MCF 10A (cell line): ENCODE measurements at regions of chr4 and their contacts with region 1.

Region 1: GRCh38 chr4:70183168-70183939 is 12.2 kb upstream of the ODAM start:
- DNase-seq: peak; percentile 62
- H3K4me3 Mint-ChIP-seq: no peak overlapping the region
- H3K27ac Mint-ChIP-seq: no peak overlapping the region
- H3K4me1 Mint-ChIP-seq: no peaks in the 10 kb centered on the region
- H3K27me3 Mint-ChIP-seq: peaks cover 90% of the 10 kb centered on the region
- CTCF ChIP-seq: peak; percentile 54

Region 2: GRCh38 chr4:69689599-69689998 is 493.8 kb before region 1 on chr4:
- CTCF ChIA-PET with region 1: interaction called, 4 read pairs
- POLR2A ChIA-PET with region 1: no interaction called
- intact Hi-C with region 1: loop called (anchors 1 kb)
- DNase-seq: peak; percentile 65
- H3K4me3 Mint-ChIP-seq: no peak overlapping the region
- H3K27ac Mint-ChIP-seq: no peak overlapping the region
- H3K4me1 Mint-ChIP-seq: no peaks in the 10 kb centered on the region
- H3K27me3 Mint-ChIP-seq: no peaks in the 10 kb centered on the region
- CTCF ChIP-seq: peak; percentile 45

Region 3: DNA sequence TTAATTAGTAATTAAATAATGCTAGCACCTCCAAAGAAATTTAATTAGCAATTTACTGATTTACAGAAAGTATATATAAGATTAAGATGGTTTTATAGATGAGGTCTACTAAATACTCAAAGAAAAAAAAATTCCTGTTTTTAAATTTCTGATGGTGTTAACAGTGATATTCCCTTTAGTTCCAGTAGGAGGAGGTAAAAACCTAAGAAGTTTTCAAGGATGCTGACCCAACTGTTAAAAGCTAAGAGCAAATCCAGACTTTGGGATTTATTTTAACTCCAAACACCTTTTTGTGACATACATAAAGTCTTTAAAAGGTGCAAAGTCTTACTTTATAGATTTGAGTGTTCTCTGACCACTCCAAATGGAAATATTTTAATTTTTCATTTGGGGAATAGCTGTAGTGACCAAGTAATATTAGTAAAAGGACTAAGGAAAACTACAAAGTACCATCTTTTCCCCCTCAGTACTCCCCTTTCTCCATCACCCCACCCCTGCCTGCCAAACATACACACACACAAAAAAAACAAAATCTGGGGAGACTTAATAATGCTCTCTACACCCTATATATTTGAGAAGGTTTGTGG is 286.7 kb before region 1 on chr4:
- CTCF ChIA-PET with region 1: interaction called, 15 read pairs
- POLR2A ChIA-PET with region 1: no interaction called
- intact Hi-C with region 1: loop called (anchors 1 kb)
- DNase-seq: peak; percentile 27
- H3K4me3 Mint-ChIP-seq: no peak overlapping the region
- H3K27ac Mint-ChIP-seq: no peak overlapping the region
- H3K4me1 Mint-ChIP-seq: no peaks in the 10 kb centered on the region
- H3K27me3 Mint-ChIP-seq: peaks cover 79% of the 10 kb centered on the region
- CTCF ChIP-seq: peak; percentile 58

Region 4: DNA sequence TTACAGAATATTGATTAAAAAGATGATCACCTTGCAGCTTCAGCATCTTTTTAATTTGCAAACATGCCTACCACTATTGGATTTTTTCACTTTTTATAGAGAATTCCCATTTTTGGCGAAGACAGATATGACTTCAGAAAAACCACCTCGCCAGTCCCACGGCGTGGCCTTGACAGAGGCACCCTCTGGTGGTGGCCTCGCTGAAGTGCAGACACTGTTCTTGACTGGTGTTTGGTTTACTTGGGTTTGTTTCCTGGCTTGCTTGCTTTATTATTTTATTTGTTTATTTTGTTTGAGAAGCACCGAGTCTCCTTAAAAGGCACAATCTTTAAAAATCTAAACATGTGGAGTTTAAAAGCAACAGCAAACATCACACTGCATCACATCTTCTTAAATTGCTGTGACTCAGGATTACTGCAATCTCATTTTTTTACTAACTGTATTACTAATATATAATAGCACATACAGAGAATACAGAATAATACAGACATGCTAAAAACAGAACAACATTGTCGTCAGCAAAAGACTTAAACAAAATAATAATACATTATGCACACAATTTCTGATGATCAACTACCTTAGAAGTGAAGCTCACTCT is 321.9 kb after region 1 on chr4:
- CTCF ChIA-PET with region 1: interaction called, 7 read pairs
- POLR2A ChIA-PET with region 1: no interaction called
- intact Hi-C with region 1: loop called (anchors 1 kb)
- DNase-seq: peak; percentile 64
- H3K4me3 Mint-ChIP-seq: no peak overlapping the region
- H3K27ac Mint-ChIP-seq: no peak overlapping the region
- H3K4me1 Mint-ChIP-seq: no peaks in the 10 kb centered on the region
- H3K27me3 Mint-ChIP-seq: peaks cover 11% of the 10 kb centered on the region
- CTCF ChIP-seq: peak; percentile 89